ENCODE measurements at regions of chr1 and their contacts with region 1.

Region 1: DNA sequence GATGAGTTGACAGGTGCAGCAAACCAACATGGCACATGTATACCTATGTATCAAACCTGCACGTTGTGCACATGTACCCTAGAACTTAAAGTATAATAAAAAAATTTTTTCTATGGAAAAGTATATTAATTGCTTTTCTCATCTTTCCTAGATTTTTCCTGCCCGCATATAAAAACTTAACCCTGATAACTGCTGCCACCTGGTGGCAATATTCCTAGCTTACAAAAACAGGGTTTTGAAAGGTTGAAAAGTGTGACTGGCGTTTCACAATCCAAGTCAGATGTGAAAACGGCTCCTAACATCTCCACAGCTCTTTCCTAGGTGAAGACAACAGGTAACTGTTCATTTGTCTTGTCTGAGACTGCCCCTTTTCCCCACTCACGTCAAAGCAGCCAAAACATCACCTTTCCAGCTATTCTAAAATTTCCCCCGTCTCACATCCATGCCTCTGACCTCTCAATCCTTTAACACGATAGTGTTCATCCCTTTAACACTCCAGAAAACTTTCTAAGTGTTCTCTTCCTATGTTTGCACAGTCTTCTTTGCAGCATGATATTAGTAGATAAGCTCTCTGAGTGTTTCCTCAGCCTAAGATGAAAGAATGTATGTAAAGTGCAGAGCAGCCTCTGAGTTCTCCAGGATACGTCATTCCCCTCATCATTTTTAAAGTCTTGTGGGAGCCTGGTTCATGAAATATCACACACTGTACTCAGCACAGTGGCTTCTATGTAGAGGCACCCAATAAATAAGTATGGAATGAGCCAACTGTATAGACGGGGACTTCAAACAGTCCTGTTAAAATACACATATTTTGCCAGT is 27.5 kb downstream of the OVGP1 start:
- DNase-seq: peak; percentile 40
- H3K4me3 Mint-ChIP-seq: no peak overlapping the region
- H3K27ac Mint-ChIP-seq: no peak overlapping the region
- H3K4me1 Mint-ChIP-seq: peaks cover 29% of the 10 kb centered on the region
- H3K27me3 Mint-ChIP-seq: no peaks in the 10 kb centered on the region

Region 2: GRCh38 chr1:111139956-111140679 is 259.9 kb before region 1 on chr1 and contains the starts of genes CEPT1 and DRAM2:
- CTCF ChIA-PET with region 1: interaction called, 3 read pairs
- POLR2A ChIA-PET with region 1: no interaction called
- intact Hi-C with region 1: loop called (anchors 10 kb)
- DNase-seq: peak; percentile 95
- H3K4me3 Mint-ChIP-seq: peak within 1 kb of the TSS; percentile 92
- H3K27ac Mint-ChIP-seq: peak within 1 kb of the TSS; percentile 88
- H3K4me1 Mint-ChIP-seq: peaks cover 34% of the 10 kb centered on the region
- H3K27me3 Mint-ChIP-seq: no peaks in the 10 kb centered on the region
- total RNA-seq, gene CEPT1: 23.9 to 28.8 TPM
- total RNA-seq, gene DRAM2: 30.1 to 30.5 TPM

Region 3: GRCh38 chr1:111214074-111214801 is 185.8 kb before region 1 on chr1:
- CTCF ChIA-PET with region 1: interaction called, 169 read pairs
- POLR2A ChIA-PET with region 1: interaction called, 3 read pairs
- intact Hi-C with region 1: no loop called
- DNase-seq: peak; percentile 45
- H3K4me3 Mint-ChIP-seq: peak overlapping the region; percentile 66
- H3K27ac Mint-ChIP-seq: peak overlapping the region; percentile 95
- H3K4me1 Mint-ChIP-seq: peaks cover 72% of the 10 kb centered on the region
- H3K27me3 Mint-ChIP-seq: peaks cover 3% of the 10 kb centered on the region

Region 4: GRCh38 chr1:111275079-111275478 is 124.9 kb before region 1 on chr1:
- CTCF ChIA-PET with region 1: interaction called, 4 read pairs
- POLR2A ChIA-PET with region 1: no interaction called
- intact Hi-C with region 1: loop called (anchors 1 kb)
- DNase-seq: peak; percentile 69
- H3K4me3 Mint-ChIP-seq: no peak overlapping the region
- H3K27ac Mint-ChIP-seq: peak overlapping the region; percentile 79
- H3K4me1 Mint-ChIP-seq: peaks cover 36% of the 10 kb centered on the region
- H3K27me3 Mint-ChIP-seq: peaks cover 21% of the 10 kb centered on the region

Region 5: DNA sequence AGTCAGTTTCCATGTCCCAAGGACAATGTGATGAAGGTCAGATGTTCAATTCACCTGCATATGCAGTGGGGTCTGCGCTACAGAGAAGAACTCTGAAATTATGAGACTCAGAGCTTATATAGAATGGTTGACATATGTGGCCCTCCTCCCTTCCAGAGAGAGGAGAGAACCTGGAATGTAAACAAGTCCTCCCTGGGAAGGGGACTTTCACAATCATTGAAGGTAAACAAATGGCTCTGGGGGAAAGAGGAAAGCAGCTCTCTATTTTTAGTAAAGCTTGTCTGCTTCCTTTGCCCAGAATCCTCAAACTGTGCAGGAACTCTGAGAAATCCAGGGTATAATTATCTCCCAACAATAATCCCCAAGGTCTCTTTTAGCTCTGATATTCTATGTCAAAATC is 17.8 kb after region 1 on chr1:
- CTCF ChIA-PET with region 1: interaction called, 37 read pairs
- POLR2A ChIA-PET with region 1: no interaction called
- intact Hi-C with region 1: no loop called
- DNase-seq: no peak
- H3K4me3 Mint-ChIP-seq: no peak overlapping the region
- H3K27ac Mint-ChIP-seq: no peak overlapping the region
- H3K4me1 Mint-ChIP-seq: no peaks in the 10 kb centered on the region
- H3K27me3 Mint-ChIP-seq: no peaks in the 10 kb centered on the region

Region 6: DNA sequence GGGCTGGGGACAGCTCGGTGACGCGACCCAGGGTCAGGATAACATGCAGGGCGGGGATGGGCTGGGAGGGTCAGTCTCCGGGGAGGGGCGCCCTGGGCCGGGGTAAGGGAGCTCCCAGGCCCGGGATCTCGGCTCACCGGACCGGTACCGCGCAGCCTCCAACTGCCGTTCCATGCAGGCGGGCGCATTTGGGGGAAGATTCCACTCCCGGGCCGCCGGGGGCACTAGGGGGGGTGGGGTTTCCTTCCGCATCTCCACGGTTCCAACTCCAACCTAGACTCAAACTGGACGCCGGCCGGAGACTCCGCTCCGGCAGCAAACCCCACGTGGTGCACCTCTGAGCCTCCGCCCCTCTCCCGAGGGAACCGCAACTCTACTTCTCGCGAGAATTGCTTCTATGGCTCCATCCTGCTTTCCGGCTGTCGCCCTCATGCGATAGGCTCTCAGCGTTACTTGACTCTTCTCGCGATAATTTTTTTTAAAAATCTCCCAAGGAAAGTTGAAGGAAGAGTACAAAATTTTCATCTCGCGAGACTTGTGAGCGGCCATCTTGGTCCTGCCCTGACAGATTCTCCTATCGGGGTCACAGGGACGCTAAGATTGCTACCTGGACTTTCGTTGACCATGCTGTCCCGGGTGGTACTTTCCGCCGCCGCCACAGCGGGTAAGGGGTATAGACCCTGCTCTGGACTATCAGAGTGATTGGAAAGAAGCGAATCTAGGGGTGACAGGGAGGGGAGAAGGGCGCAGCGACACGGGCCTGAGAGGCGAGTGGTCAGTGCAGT is 49.1 kb after region 1 on chr1 and contains the starts of genes ATP5PB and WDR77:
- CTCF ChIA-PET with region 1: interaction called, 11 read pairs
- POLR2A ChIA-PET with region 1: interaction called, 3 read pairs
- intact Hi-C with region 1: loop called (anchors 5 kb)
- DNase-seq: peak; percentile 95
- H3K4me3 Mint-ChIP-seq: peak within 1 kb of the TSS; percentile 100
- H3K27ac Mint-ChIP-seq: peak within 1 kb of the TSS; percentile 94
- H3K4me1 Mint-ChIP-seq: peaks cover 73% of the 10 kb centered on the region
- H3K27me3 Mint-ChIP-seq: no peaks in the 10 kb centered on the region
- total RNA-seq, gene ATP5PB: 300 to 302 TPM
- total RNA-seq, gene WDR77: 44.6 to 48.4 TPM

Region 7: DNA sequence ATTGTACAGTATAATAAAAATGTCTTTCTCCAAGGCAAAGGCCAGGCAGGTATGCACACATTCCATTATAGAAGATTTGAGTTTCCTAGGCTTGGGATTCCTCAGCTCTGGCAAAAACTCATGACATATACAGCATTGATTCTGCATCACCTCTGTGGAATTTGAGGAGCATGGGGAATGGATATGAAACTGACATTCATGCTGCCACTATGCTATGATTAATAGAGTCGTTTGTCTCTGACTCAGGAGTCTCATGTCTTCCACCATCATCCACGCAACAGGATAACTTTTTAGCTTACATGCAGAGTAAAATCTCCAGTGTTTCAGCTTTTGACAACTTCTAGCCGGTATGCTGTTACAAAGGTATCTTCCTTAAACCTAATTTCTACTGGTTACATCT is 153.2 kb after region 1 on chr1:
- CTCF ChIA-PET with region 1: no interaction called
- POLR2A ChIA-PET with region 1: no interaction called
- intact Hi-C with region 1: no loop called
- DNase-seq: no peak
- H3K4me3 Mint-ChIP-seq: no peak overlapping the region
- H3K27ac Mint-ChIP-seq: no peak overlapping the region
- H3K4me1 Mint-ChIP-seq: no peaks in the 10 kb centered on the region
- H3K27me3 Mint-ChIP-seq: no peaks in the 10 kb centered on the region

Measured in activated CD4-positive, alpha-beta memory T cell treated with anti-CD3 and anti-CD28 coated beads for 36 hours (primary cell).